Left cardiac atrium (tissue), 4 donors: ENCODE measurements at regions of chr4 and their contacts with region 1.

Region 1: GRCh38 chr4:67545199-67546003 is at the start of gene CENPC:
- DNase-seq: peak; percentile 99
- ATAC-seq: peak; percentile 99 to 100
- total RNA-seq, gene CENPC: 10.3 to 10.6 TPM

Region 2: GRCh38 chr4:66855956-66856355 is 689.4 kb before region 1 on chr4:
- intact Hi-C with region 1: no loop called
- DNase-seq: no peak
- ATAC-seq: no peak

Region 3: GRCh38 chr4:67700738-67701516 is 155.5 kb after region 1 on chr4 and contains the start of gene UBA6:
- intact Hi-C with region 1: loop called in 1 of 2 experiments (anchors 5 kb)
- DNase-seq: peak; percentile 98
- ATAC-seq: peak; percentile 100
- total RNA-seq, gene UBA6: 23.1 to 32.5 TPM

Region 4: DNA sequence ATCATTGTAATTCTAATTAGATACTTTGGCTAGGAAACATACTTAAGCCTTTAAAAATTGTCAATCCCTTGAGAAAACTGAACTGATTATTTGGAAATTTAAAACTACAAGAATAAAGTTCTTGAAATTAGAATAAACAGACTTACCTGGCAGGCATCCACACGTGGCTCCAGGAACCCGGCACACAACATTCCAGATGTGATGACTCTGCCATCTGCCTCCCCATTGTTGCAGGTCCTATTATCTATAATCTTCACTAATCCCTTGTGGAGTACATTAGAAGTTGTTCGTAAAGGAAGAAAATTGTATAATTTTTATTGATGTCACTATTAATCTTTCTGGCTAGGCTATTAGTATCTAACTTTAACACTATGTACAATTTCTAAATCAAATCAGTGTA is 225.0 kb after region 1 on chr4:
- intact Hi-C with region 1: no loop called
- DNase-seq: no peak
- ATAC-seq: no peak